HEK293 (cell line): ENCODE measurements at regions of chr5 and their contacts with region 1.

Region 1: GRCh38 chr5:177454397-177455035 is 7.9 kb downstream of the PRR7 start:
- H3K4me3 ChIP-seq: peak overlapping the region; percentile 69
- H3K27ac ChIP-seq: peak overlapping the region; percentile 89
- H3K4me1 ChIP-seq: peaks cover 8% of the 10 kb centered on the region
- CTCF ChIP-seq: peak; percentile 90

Region 2: GRCh38 chr5:177311723-177312648 is 142.5 kb before region 1 on chr5 and contains the start of gene MXD3:
- CTCF ChIA-PET with region 1: interaction called, 15 read pairs
- POLR2A ChIA-PET with region 1: interaction called, 5 read pairs
- H3K4me3 ChIP-seq: peak within 1 kb of the TSS; percentile 86
- H3K27ac ChIP-seq: peak within 1 kb of the TSS; percentile 67
- H3K4me1 ChIP-seq: peaks cover 5% of the 10 kb centered on the region
- CTCF ChIP-seq: no peak

Region 3: DNA sequence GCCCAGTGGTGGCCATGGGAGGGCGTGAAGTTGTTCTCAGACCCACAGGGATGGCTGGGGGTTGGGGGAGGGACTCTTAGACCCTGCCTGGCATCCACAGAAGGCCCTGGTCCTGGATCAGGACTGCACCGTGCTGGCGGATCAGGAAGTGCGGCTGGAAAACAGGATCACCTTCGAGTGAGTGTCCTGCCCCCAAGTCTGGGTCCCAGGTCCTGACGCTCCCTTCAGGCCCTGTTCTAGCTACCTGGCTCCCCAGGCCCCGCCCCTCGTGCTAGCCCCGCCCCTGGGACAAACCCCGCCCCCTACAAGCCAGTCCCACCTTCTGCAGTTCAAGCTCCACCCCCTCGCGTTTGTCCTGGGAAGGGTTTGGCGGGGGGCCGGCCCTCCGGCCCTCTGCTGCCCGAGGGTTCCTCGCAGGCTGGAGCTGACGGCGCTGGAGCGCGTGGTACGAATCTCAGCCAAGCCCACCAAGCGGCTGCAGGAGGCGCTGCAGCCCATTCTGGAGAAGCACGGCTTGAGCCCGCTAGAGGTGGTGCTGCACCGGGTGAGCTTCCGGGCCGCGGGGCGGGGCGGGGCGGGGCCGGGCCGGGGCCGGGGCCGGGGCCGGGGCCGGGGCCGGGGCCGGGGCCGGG is 83.9 kb before region 1 on chr5:
- CTCF ChIA-PET with region 1: interaction called, 13 read pairs
- POLR2A ChIA-PET with region 1: interaction called, 11 read pairs
- H3K4me3 ChIP-seq: peak overlapping the region; percentile 63
- H3K27ac ChIP-seq: peak overlapping the region; percentile 88; the same call in 1 of the 2 replicates
- H3K4me1 ChIP-seq: peaks cover 6% of the 10 kb centered on the region; the same call in 1 of the 2 replicates
- CTCF ChIP-seq: peak; percentile 63

Region 4: GRCh38 chr5:177403792-177404640 is 50.5 kb before region 1 on chr5:
- CTCF ChIA-PET with region 1: interaction called, 76 read pairs
- POLR2A ChIA-PET with region 1: interaction called, 13 read pairs
- H3K4me3 ChIP-seq: peak overlapping the region; percentile 50
- H3K27ac ChIP-seq: peak overlapping the region; percentile 56; the same call in 1 of the 2 replicates
- H3K4me1 ChIP-seq: no peaks in the 10 kb centered on the region
- CTCF ChIP-seq: peak; percentile 97

Region 5: DNA sequence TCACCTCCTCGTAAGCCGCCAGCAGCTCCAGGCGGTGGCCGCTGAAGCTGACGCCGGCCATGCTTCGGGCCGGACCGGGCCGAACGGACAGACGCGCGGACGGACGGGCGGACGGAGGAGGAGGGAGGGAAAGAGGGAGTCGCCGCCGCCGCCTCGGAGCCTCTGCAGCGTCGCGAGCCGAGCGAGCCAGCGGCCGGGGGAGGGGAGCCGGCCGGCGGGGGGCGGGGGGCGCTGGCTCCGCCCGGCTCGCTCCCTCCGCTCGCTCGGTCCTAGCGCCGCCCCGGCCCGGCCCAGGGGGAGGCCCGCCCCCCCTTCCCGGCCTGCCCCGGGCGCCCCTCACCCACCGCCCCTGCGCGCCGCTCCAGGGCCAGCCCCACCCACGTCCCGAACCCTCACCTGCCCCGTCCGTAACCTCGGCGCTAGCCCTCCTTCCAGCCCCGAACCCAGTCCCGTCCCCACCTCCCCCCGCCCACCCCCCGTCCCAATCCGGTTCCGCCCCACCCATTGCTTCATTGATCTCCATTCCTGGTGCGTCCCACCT is 19.0 kb after region 1 on chr5 and contains the start of gene DBN1:
- CTCF ChIA-PET with region 1: interaction called, 14 read pairs
- POLR2A ChIA-PET with region 1: interaction called, 17 read pairs
- H3K4me3 ChIP-seq: peak within 1 kb of the TSS; percentile 85
- H3K27ac ChIP-seq: peak within 1 kb of the TSS; percentile 82; the same call in 1 of the 2 replicates
- H3K4me1 ChIP-seq: peaks cover 4% of the 10 kb centered on the region
- CTCF ChIP-seq: no peak